CD4-positive, alpha-beta T cell (primary cell): ENCODE measurements at regions of chr17 and their contacts with region 1.

Region 1: GRCh38 chr17:47941236-47941994 is at the start of gene PNPO:
- DNase-seq: peak; percentile 83 to 98 (median 88)
- ATAC-seq: peak; percentile 98
- H3K4me3 ChIP-seq: peak within 1 kb of the TSS; percentile 97
- H3K4me3 Mint-ChIP-seq: peak within 1 kb of the TSS; percentile 87
- H3K27ac ChIP-seq: peak within 1 kb of the TSS; percentile 66 to 82
- H3K27ac Mint-ChIP-seq: peak within 1 kb of the TSS; percentile 8
- H3K4me1 ChIP-seq: peaks cover 45% of the 10 kb centered on the region
- H3K4me1 Mint-ChIP-seq: peaks cover 36% of the 10 kb centered on the region
- H3K27me3 ChIP-seq: no peaks in the 10 kb centered on the region
- H3K27me3 Mint-ChIP-seq: no peaks in the 10 kb centered on the region
- CTCF ChIP-seq: no peak
- total RNA-seq, gene PNPO: 2.2 to 2.4 TPM

Region 2: GRCh38 chr17:47831003-47831933 is 110.1 kb before region 1 on chr17 and contains the starts of genes LRRC46 and MRPL10:
- CTCF ChIA-PET with region 1: interaction called, 4 read pairs
- POLR2A ChIA-PET with region 1: interaction called, 9 read pairs
- intact Hi-C with region 1: loop called in 1 of 2 experiments (anchors 2 kb)
- DNase-seq: peak; percentile 84 to 95 (median 88)
- ATAC-seq: peak; percentile 86
- H3K4me3 ChIP-seq: peak within 1 kb of the TSS; percentile 92
- H3K4me3 Mint-ChIP-seq: peak within 1 kb of the TSS; percentile 89
- H3K27ac ChIP-seq: peak within 1 kb of the TSS; percentile 78 to 90
- H3K27ac Mint-ChIP-seq: peak within 1 kb of the TSS; percentile 78
- H3K4me1 ChIP-seq: peaks cover 66% of the 10 kb centered on the region
- H3K4me1 Mint-ChIP-seq: peaks cover 58% of the 10 kb centered on the region
- H3K27me3 ChIP-seq: no peaks in the 10 kb centered on the region
- H3K27me3 Mint-ChIP-seq: no peaks in the 10 kb centered on the region
- CTCF ChIP-seq: no peak
- total RNA-seq, gene LRRC46: 0.42 to 0.85 TPM
- total RNA-seq, gene MRPL10: 49.0 to 51.4 TPM

Region 3: GRCh38 chr17:47959825-47960655 is 18.6 kb after region 1 on chr17:
- CTCF ChIA-PET with region 1: no interaction called
- POLR2A ChIA-PET with region 1: no interaction called
- intact Hi-C with region 1: no loop called
- DNase-seq: no peak
- ATAC-seq: no peak
- H3K4me3 ChIP-seq: no peak overlapping the region
- H3K4me3 Mint-ChIP-seq: no peak overlapping the region
- H3K27ac ChIP-seq: no peak overlapping the region
- H3K27ac Mint-ChIP-seq: no peak overlapping the region
- H3K4me1 ChIP-seq: no peaks in the 10 kb centered on the region
- H3K4me1 Mint-ChIP-seq: no peaks in the 10 kb centered on the region
- H3K27me3 ChIP-seq: no peaks in the 10 kb centered on the region
- H3K27me3 Mint-ChIP-seq: no peaks in the 10 kb centered on the region
- CTCF ChIP-seq: no peak

Region 4: GRCh38 chr17:47970704-47971463 is 29.5 kb after region 1 on chr17 and contains the start of gene CDK5RAP3:
- CTCF ChIA-PET with region 1: interaction called, 70 read pairs
- POLR2A ChIA-PET with region 1: interaction called, 36 read pairs
- intact Hi-C with region 1: loop called (anchors 1 to 2 kb)
- DNase-seq: peak; percentile 95 to 99 (median 98)
- ATAC-seq: peak; percentile 98
- H3K4me3 ChIP-seq: peak within 1 kb of the TSS; percentile 99
- H3K4me3 Mint-ChIP-seq: peak within 1 kb of the TSS; percentile 99
- H3K27ac ChIP-seq: peak within 1 kb of the TSS; percentile 32 to 72
- H3K27ac Mint-ChIP-seq: peak within 1 kb of the TSS; percentile 86
- H3K4me1 ChIP-seq: peaks cover 26% of the 10 kb centered on the region
- H3K4me1 Mint-ChIP-seq: peaks cover 26% of the 10 kb centered on the region
- H3K27me3 ChIP-seq: no peaks in the 10 kb centered on the region
- H3K27me3 Mint-ChIP-seq: no peaks in the 10 kb centered on the region
- CTCF ChIP-seq: peak; percentile 92
- total RNA-seq, gene CDK5RAP3: 206 to 224 TPM